ENCODE measurements at regions of chr3 and their contacts with region 1.

Region 1: DNA sequence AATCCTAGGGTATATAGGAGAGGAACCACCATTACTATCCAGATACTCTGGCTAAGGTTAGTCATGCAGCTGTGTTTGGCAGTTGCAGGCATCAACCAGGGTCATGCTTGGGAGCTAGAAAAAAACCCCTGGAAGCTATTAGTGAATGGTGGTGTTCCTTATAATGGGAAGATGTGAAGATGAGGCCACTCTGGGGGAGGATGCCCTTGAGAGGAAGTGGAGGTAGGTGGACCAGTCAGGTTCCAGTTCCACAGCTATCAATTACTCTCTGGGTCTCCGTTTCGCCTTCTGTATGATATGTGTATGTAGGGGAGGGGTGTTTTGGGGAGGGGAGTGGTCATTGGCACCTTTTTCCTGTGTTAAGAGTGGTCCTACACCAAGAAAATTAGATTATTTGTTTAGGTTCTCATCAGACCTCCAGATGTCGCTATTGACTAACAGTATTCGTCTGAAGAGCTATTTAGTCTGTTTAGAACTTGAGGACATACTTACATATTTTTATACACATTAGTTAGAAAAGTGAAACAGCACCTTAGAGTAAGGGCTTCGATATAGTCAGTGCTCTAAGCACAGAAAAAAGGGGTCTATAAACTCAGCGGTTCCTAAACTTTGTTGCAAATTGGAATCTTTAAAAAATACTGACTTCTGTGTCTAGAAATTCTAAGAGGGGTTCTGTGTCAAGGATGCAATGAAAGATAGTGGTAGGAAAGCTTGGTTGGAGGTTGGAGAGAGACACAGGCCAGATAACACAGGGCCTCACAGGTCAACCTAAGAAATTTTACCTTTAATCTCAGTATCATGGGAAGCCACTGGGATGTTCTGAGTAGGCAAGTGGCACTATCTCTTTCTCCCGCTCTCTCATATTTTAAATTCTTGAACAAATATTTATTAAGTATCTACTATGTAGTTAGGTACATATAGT is 9.1 kb upstream of the HPS3 start:
- DNase-seq: peak; percentile 70
- H3K4me3 ChIP-seq: no peak overlapping the region
- H3K27ac ChIP-seq: no peak overlapping the region
- H3K4me1 ChIP-seq: no peaks in the 10 kb centered on the region
- H3K27me3 ChIP-seq: no peaks in the 10 kb centered on the region
- CTCF ChIP-seq: peak; percentile 69

Region 2: GRCh38 chr3:149273096-149273751 is 152.9 kb after region 1 on chr3:
- CTCF ChIA-PET with region 1: interaction called, 5 read pairs
- POLR2A ChIA-PET with region 1: no interaction called
- intact Hi-C with region 1: loop called (anchors 1 kb)
- DNase-seq: peak; percentile 83
- H3K4me3 ChIP-seq: no peak overlapping the region
- H3K27ac ChIP-seq: no peak overlapping the region
- H3K4me1 ChIP-seq: no peaks in the 10 kb centered on the region
- H3K27me3 ChIP-seq: no peaks in the 10 kb centered on the region
- CTCF ChIP-seq: peak; percentile 98

Region 3: DNA sequence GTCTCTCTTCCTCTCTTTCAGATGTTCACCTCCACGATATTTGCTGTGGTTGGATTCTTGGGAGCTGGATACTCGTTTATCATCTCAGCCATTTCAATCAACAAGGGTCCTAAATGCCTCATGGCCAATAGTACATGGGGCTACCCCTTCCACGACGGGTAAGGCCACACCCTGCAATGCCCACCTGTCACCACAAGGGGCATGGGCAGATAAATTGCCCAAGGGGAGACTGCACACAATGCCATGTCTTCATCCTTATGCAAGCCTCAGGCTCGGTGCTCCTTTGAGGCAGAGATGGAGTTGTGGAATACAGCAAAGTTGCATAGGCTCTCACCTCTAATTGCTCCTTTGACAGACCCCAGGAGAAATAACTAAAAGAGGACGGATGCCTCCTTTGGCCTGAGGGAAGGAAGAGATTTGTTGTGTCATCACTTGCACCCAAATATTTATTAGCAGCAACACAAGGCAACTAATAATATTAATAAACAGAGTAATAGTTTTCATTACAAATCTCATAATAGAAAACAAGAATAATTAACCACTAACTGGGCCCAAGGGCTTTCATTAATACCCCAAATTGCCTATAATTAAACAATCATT is 367.4 kb after region 1 on chr3:
- CTCF ChIA-PET with region 1: interaction called, 3 read pairs
- POLR2A ChIA-PET with region 1: no interaction called
- intact Hi-C with region 1: loop called (anchors 5 kb)
- DNase-seq: peak; percentile 59
- H3K4me3 ChIP-seq: no peak overlapping the region
- H3K27ac ChIP-seq: no peak overlapping the region
- H3K4me1 ChIP-seq: no peaks in the 10 kb centered on the region
- H3K27me3 ChIP-seq: peaks cover 4% of the 10 kb centered on the region
- CTCF ChIP-seq: peak; percentile 62